Naive thymus-derived CD4-positive, alpha-beta T cell (primary cell): ENCODE measurements at regions of chr12 and their contacts with region 1.

Region 1: GRCh38 chr12:124466216-124467128 is 100.9 kb downstream of the NCOR2 start:
- DNase-seq: peak; percentile 76 to 91 (median 83)
- ATAC-seq: peak; percentile 98
- H3K4me3 ChIP-seq: peak overlapping the region; percentile 63
- H3K4me3 Mint-ChIP-seq: peak overlapping the region; percentile 48 to 85 (median 74)
- H3K27ac ChIP-seq: peak overlapping the region; percentile 58
- H3K27ac Mint-ChIP-seq: peak overlapping the region; percentile 73 to 93 (median 82)
- H3K4me1 ChIP-seq: peaks cover 18 to 27% of the 10 kb centered on the region in 2 donors
- H3K4me1 Mint-ChIP-seq: peaks cover 0 to 46% (median 37%) of the 10 kb centered on the region in 7 donors
- H3K27me3 ChIP-seq: no peaks in the 10 kb centered on the region
- H3K27me3 Mint-ChIP-seq: no peaks in the 10 kb centered on the region

Region 2: GRCh38 chr12:124152731-124153130 is 313.7 kb before region 1 on chr12:
- CTCF ChIA-PET with region 1: no interaction called
- POLR2A ChIA-PET with region 1: no interaction called
- intact Hi-C with region 1: no loop called
- DNase-seq: no peak
- ATAC-seq: no peak
- H3K4me3 ChIP-seq: no peak overlapping the region
- H3K4me3 Mint-ChIP-seq: no peak overlapping the region
- H3K27ac ChIP-seq: no peak overlapping the region
- H3K27ac Mint-ChIP-seq: no peak overlapping the region
- H3K4me1 ChIP-seq: no peaks in the 10 kb centered on the region
- H3K4me1 Mint-ChIP-seq: no peaks in the 10 kb centered on the region
- H3K27me3 ChIP-seq: no peaks in the 10 kb centered on the region
- H3K27me3 Mint-ChIP-seq: peaks cover 0 to 7% (median 5%) of the 10 kb centered on the region in 5 donors

Region 3: GRCh38 chr12:124347716-124348357 is 118.6 kb before region 1 on chr12:
- CTCF ChIA-PET with region 1: no interaction called
- POLR2A ChIA-PET with region 1: no interaction called
- intact Hi-C with region 1: loop called in 1 of 2 experiments (anchors 1 kb)
- DNase-seq: peak in 6 of 9 donors; percentile 5 to 43 (median 24)
- ATAC-seq: no peak
- H3K4me3 ChIP-seq: no peak overlapping the region
- H3K4me3 Mint-ChIP-seq: no peak overlapping the region
- H3K27ac ChIP-seq: no peak overlapping the region
- H3K27ac Mint-ChIP-seq: no peak overlapping the region
- H3K4me1 ChIP-seq: no peaks in the 10 kb centered on the region
- H3K4me1 Mint-ChIP-seq: no peaks in the 10 kb centered on the region
- H3K27me3 ChIP-seq: no peaks in the 10 kb centered on the region
- H3K27me3 Mint-ChIP-seq: no peaks in the 10 kb centered on the region

Region 4: GRCh38 chr12:124388679-124389536 is 77.6 kb before region 1 on chr12:
- CTCF ChIA-PET with region 1: no interaction called
- POLR2A ChIA-PET with region 1: no interaction called
- intact Hi-C with region 1: loop called (anchors 2 to 5 kb)
- DNase-seq: peak; percentile 49 to 78 (median 63)
- ATAC-seq: peak; percentile 80
- H3K4me3 ChIP-seq: peak overlapping the region; percentile 27
- H3K4me3 Mint-ChIP-seq: peak overlapping the region; percentile 50 to 79 (median 68)
- H3K27ac ChIP-seq: peak overlapping the region; percentile 54
- H3K27ac Mint-ChIP-seq: peak overlapping the region in 7 of 9 donors; percentile 8 to 68 (median 43)
- H3K4me1 ChIP-seq: peaks cover 4 to 20% of the 10 kb centered on the region in 2 donors
- H3K4me1 Mint-ChIP-seq: peaks cover 18 to 45% (median 38%) of the 10 kb centered on the region in 7 donors
- H3K27me3 ChIP-seq: no peaks in the 10 kb centered on the region
- H3K27me3 Mint-ChIP-seq: no peaks in the 10 kb centered on the region

Region 5: DNA sequence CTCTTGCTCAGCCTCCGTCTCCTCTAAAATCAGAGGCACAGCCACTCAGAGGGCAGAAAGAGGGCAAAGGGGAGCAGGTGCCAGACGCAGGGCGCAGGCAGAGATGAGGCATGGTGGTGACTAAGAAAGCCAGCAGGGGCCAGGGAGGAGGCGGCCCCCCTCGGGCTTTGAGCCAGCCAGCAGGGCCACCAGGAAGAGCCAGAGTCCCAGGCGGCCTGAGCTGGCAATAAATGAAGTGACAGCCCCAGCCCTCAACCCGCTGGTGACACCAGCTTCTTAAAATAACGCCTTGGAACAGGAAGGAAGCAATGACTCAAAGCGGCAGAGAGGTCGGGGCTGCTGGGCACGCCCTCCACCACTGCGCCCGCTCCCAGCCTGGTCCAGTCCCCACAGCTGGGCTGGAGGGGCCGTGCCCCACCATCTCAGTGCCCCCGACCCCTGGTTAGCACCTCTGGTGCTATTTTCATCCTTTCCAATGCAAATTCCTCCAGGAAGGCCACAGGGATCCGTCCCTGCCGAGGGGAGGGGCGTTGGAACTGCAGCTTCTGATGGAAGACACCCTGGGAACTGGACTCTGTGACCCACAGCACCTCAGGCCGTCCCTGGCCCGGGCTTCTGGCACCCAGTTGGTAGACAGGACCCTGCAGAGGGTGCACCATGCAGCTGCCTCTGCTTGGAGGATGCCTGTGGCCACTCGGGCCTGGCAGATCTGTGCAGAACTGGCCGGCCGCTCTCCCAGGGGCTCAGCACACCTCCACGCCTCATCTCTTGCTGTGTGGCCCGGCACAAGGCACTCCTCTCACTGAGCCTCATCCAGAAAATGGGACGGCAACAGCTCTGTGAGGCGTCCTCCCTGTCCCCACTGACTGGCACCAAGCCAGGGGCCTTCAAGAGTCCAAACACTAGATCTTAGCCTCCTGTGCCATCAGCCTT is 12.8 kb before region 1 on chr12:
- CTCF ChIA-PET with region 1: no interaction called
- POLR2A ChIA-PET with region 1: interaction called, 3 read pairs
- intact Hi-C with region 1: loop called (anchors 1 kb)
- DNase-seq: peak; percentile 47 to 82 (median 61)
- ATAC-seq: peak; percentile 78
- H3K4me3 ChIP-seq: peak overlapping the region; percentile 58
- H3K4me3 Mint-ChIP-seq: peak overlapping the region; percentile 42 to 77 (median 66)
- H3K27ac ChIP-seq: peak overlapping the region; percentile 48
- H3K27ac Mint-ChIP-seq: peak overlapping the region; percentile 10 to 87 (median 63)
- H3K4me1 ChIP-seq: peaks cover 51 to 74% of the 10 kb centered on the region in 2 donors
- H3K4me1 Mint-ChIP-seq: peaks cover 23 to 74% (median 55%) of the 10 kb centered on the region in 7 donors
- H3K27me3 ChIP-seq: no peaks in the 10 kb centered on the region
- H3K27me3 Mint-ChIP-seq: no peaks in the 10 kb centered on the region

Region 6: DNA sequence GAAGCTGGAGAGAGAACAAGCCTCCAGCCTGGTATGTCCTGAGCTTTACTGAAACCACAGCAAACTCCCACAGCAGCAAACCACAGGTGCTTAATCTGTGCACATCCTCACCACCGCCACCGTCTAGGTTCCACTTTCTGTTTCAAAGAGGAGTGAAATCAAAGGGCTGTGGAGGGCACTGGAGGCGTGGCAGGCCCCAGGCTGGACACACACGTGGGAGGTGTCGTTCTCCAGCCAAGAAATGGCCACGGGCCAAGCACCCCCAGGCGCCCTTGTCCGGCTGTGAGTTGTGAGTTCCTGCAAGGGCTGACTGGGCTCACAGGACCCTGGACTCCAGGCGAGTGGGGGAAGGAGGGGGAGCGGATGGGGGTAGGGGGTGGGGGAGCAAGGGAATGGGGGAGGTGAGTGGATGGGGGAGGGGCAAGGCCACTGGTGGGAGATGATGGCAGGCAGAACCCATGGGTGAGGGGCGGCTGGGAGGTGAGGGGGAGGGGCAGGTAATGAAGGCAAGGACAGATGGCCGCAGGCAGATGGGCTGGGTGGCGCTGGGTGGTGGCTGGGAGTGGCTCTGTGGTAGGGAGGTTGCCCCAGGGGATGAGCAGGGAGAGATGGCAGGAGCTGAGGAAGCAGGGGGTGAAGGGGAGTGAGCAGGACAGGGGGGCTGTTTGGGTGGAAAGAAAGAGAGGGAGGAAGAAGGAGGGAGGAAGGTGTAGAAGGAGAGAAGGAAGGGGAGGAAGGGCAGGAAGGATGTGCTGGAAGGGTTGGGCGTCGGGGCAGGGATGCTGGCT is 14.2 kb after region 1 on chr12:
- CTCF ChIA-PET with region 1: no interaction called
- POLR2A ChIA-PET with region 1: interaction called, 3 read pairs
- intact Hi-C with region 1: loop called in 1 of 2 experiments (anchors 1 kb)
- DNase-seq: peak in 1 of 9 donors; percentile 50
- ATAC-seq: peak; percentile 40
- H3K4me3 ChIP-seq: no peak overlapping the region
- H3K4me3 Mint-ChIP-seq: peak overlapping the region in 2 of 10 donors; percentile 33 to 45
- H3K27ac ChIP-seq: no peak overlapping the region
- H3K27ac Mint-ChIP-seq: peak overlapping the region in 5 of 9 donors; percentile 19 to 78 (median 43)
- H3K4me1 ChIP-seq: peaks cover 0 to 8% of the 10 kb centered on the region in 2 donors
- H3K4me1 Mint-ChIP-seq: peaks cover 15 to 37% (median 31%) of the 10 kb centered on the region in 7 donors
- H3K27me3 ChIP-seq: no peaks in the 10 kb centered on the region
- H3K27me3 Mint-ChIP-seq: no peaks in the 10 kb centered on the region